AG04449 (cell line): ENCODE measurements at regions of chr2 and their contacts with region 1.

Region 1: GRCh38 chr2:72150157-72150865 is 2.6 kb upstream of the CYP26B1 start:
- DNase-seq: no peak
- H3K4me3 ChIP-seq: peak overlapping the region; percentile 34
- CTCF ChIP-seq: peak; percentile 73

Region 2: DNA sequence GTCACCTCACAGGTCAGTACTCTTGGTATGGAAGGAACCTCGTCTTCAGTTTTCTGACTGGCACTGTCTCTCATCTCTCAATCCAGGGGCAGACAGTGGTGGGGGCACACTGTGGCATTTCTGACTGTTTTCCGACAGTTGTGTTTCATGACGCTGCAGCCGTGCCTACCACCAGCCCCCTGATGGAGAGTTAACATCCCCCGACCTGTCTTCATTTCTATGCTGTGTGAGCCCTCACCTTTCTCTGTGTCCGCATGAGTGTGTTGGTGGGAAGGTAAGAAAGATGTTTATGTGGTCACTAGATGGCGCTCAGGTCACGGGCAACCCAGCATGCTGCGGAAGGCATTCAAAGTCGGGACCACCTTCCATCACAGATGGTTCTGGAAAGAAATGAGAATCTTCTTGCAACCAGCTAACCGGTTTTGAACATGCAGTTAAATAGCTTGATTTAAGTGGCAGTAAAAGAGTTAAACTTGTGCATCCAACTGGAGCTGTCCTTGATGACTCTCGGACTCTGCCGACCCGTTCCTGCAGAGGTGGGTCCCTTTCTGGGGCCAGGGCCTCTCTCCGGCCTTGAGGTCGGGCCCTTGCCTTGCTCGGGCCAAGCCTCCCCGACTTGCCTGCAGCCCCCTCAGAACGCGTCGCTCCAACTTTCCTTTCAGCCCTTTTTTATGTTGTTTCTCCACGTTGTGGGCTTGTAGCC is 604.6 kb before region 1 on chr2:
- CTCF ChIA-PET with region 1: interaction called, 119 read pairs
- POLR2A ChIA-PET with region 1: no interaction called
- DNase-seq: no peak
- H3K4me3 ChIP-seq: no peak overlapping the region
- CTCF ChIP-seq: peak; percentile 68

Region 3: GRCh38 chr2:71873594-71873993 is 276.7 kb before region 1 on chr2:
- CTCF ChIA-PET with region 1: interaction called, 10 read pairs
- POLR2A ChIA-PET with region 1: no interaction called
- DNase-seq: no peak
- H3K4me3 ChIP-seq: no peak overlapping the region
- CTCF ChIP-seq: no peak

Region 4: DNA sequence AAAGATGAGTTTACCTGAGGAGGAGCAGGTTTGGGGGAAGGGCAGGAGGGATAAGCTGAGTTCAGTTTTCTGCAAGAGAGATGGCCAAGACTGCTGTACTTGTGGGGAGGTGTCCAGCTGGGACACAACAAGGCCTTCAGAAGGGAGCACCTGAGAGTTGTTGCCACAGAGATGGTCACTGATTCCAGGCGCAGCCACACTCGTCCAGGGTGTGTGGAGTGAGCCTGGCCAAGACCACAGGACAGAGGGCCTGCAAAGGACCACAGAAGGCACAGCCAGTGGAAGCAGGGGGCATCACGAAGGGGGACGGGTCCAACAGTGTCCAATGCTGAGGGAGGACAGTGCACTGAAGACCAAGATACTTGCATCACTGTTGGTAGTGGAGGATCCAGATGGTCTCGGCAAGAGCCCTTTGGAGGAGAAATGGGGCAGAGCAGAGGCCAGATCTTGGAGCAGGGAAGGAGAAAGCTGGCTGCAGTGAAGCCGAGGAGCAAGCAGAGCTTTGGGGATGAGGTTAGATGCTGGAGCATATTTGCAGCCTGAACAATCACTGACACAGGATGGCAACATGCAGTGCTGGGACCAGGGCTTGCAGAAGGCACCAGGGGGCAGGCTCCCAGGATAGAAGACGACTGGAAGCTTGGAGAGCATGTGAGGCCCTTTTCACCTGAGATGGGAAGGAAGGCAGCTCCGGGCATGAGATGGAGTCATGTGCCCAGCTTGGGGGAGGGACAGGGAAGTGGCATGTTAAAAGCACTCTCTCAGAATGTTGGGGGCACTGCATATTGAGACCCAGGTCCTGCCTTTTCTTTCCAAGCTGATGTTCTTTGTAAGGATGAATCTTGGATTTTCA is 216.6 kb before region 1 on chr2:
- CTCF ChIA-PET with region 1: interaction called, 15 read pairs
- POLR2A ChIA-PET with region 1: no interaction called
- DNase-seq: no peak
- H3K4me3 ChIP-seq: no peak overlapping the region
- CTCF ChIP-seq: peak; percentile 51

Region 5: DNA sequence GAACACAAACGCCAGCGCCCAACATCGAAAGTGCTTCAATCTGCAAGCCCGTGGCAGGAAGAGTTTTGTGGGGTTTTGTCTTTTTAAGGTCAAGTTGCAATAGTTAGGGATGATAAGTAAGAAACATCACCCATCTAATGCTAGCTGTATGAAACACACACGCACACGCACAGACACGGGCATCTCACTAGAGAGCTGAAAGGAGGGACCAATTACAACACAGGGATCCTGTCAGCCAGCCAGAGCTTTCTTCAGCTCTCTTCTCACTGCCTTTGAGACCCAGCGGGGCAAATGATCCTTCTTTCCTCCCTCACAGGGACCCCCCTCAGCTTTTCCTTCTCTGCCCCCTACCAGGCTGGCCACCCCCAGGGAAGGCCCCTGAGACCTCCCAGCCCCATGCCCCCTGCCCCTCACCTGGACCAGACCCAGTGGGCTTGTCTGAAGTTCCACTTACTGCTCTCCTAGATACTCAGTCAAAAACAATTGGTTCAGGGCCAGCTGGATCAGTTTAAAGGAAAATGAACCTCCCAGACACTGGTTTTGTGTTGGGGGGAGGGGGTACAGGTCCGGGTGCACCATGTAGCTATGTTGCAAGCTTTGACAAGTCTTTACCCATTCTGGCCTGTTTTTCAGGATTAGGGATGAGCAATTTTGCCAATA is 20.5 kb before region 1 on chr2:
- CTCF ChIA-PET with region 1: no interaction called
- POLR2A ChIA-PET with region 1: no interaction called
- DNase-seq: no peak
- H3K4me3 ChIP-seq: no peak overlapping the region
- CTCF ChIP-seq: no peak

Region 6: DNA sequence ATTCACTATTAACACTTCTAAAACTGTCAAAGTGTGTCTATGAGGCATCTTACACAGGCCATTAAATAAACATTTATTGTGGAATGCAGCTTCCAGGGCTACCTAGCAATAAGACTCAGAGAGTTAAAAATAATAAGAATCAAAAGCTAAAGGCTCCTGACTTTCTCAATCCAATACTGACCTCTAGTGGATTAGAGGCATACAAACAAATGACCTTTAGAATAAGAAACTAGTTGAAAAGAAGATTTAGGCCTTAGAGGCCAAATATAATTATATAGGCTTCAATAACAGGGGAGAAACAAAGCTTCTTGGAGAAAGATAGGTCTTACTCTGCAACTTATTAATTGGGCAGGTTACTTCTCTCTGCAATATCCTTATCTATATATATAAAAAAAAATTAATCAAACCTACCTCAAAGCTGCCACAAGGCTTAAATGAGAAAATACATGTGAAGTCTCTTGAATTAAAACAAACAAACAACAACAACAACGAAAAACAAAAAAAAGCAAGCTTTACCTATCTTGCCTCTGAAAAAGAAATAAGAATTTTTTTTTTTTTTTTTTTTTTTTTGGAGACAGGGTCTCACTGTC is 429.4 kb after region 1 on chr2:
- CTCF ChIA-PET with region 1: interaction called, 63 read pairs
- POLR2A ChIA-PET with region 1: no interaction called
- DNase-seq: no peak
- H3K4me3 ChIP-seq: no peak overlapping the region
- CTCF ChIP-seq: peak; percentile 33